Natural killer cell (primary cell): ENCODE measurements at regions of chr20 and their contacts with region 1.

Region 1: GRCh38 chr20:51661609-51662178 is 106.5 kb downstream of the ATP9A start:
- DNase-seq: peak in 1 of 2 donors; percentile 66
- ATAC-seq: peak; percentile 76 to 92 (median 89)
- H3K4me3 ChIP-seq: no peak overlapping the region
- H3K4me3 Mint-ChIP-seq: no peak overlapping the region
- H3K27ac ChIP-seq: no peak overlapping the region
- H3K27ac Mint-ChIP-seq: peak overlapping the region; percentile 38 to 77
- H3K4me1 ChIP-seq: peaks cover 30% of the 10 kb centered on the region
- H3K4me1 Mint-ChIP-seq: peaks cover 28 to 33% of the 10 kb centered on the region in 2 donors
- H3K27me3 ChIP-seq: no peaks in the 10 kb centered on the region
- H3K27me3 Mint-ChIP-seq: peaks cover 0 to 3% of the 10 kb centered on the region in 2 donors
- CTCF ChIP-seq: no peak

Region 2: DNA sequence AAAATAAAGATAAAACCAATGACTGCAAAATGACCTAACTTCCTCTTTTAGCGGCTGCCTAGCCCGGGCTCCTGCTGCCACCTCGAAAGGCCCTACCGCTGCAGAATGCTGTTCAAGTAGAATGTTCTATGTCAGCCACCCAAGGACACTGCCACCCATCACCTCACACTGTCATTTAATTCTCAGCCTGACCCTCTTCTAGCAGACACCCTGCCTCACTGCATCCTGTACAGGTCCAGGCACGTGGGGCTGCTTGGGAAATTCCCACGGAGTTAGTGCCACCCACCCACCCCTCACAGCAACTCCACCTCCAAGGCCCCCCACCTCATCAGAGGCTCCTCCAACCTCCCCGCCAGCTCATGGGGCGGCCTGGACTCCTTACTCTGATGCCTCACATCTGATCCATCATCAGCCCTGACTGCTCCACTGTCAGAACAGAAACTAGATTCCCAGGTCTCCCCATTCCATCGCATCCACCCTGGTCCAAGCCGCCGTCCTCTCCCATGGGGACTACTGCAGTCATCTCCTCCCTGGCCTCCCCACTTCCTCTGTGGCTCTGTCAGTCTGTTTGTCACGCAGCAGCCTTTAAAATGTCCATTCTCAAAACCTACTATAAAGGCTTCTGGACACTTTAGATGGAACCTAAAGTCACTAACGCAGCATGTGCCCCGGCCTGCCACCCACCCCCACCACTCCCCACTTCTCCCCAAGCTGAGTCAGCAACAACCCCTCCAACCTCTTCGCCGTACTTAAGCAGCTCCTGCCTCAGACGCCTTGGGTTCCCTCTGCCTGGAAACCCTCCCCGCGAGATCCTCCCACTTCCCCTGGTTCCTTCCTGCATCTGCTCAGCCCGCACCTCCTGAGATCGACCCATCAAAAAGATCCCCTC is 136.2 kb before region 1 on chr20:
- intact Hi-C with region 1: loop called (anchors 10 kb)
- DNase-seq: peak; percentile 74 to 79
- ATAC-seq: peak; percentile 69 to 89 (median 85)
- H3K4me3 ChIP-seq: no peak overlapping the region
- H3K4me3 Mint-ChIP-seq: peak overlapping the region; percentile 72
- H3K27ac ChIP-seq: peak overlapping the region; percentile 90
- H3K27ac Mint-ChIP-seq: peak overlapping the region; percentile 95 to 100
- H3K4me1 ChIP-seq: peaks cover 65% of the 10 kb centered on the region
- H3K4me1 Mint-ChIP-seq: peaks cover 82 to 86% of the 10 kb centered on the region in 2 donors
- H3K27me3 ChIP-seq: no peaks in the 10 kb centered on the region
- H3K27me3 Mint-ChIP-seq: no peaks in the 10 kb centered on the region
- CTCF ChIP-seq: no peak